ENCODE measurements at regions of chr12 and their contacts with region 1.

Region 1: DNA sequence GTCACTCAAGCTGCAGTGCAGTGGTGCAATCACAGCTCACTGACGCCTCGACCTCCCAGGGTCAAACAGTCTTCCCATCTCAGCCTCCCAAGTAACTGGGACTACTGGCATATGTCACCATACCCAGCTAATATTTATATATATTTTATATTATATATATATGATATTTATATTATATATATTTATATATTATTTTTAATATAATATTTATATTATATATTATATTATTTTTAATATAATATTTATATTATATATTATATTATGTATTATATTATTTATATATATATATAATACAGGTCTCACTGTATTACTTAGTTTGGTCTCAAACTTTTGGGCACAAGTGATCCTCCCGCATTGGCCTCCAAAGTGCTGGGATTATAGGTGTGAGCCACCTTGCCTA is 9.4 kb downstream of the ZNF84 start:
- DNase-seq: no peak
- ATAC-seq: no peak
- H3K4me3 ChIP-seq: peak overlapping the region in 1 of 4 donors; percentile 30
- H3K27ac ChIP-seq: no peak overlapping the region
- H3K4me1 ChIP-seq: no peaks in the 10 kb centered on the region
- H3K27me3 ChIP-seq: peaks cover 0 to 4% (median 0%) of the 10 kb centered on the region in 3 donors
- CTCF ChIP-seq: no peak
- POLR2A ChIP-seq: no peak

Region 2: GRCh38 chr12:133073836-133074235 is 27.1 kb after region 1 on chr12:
- in situ Hi-C with region 1: loop called in 1 of 4 experiments (anchors 5 kb)
- intact Hi-C with region 1: loop called (anchors 2 kb)
- DNase-seq: no peak
- ATAC-seq: no peak
- H3K4me3 ChIP-seq: no peak overlapping the region
- H3K27ac ChIP-seq: no peak overlapping the region
- H3K4me1 ChIP-seq: no peaks in the 10 kb centered on the region
- H3K27me3 ChIP-seq: no peaks in the 10 kb centered on the region
- CTCF ChIP-seq: no peak
- POLR2A ChIP-seq: no peak